CD4-positive, alpha-beta memory T cell (primary cell): ENCODE measurements at regions of chr1 and their contacts with region 1.

Region 1: DNA sequence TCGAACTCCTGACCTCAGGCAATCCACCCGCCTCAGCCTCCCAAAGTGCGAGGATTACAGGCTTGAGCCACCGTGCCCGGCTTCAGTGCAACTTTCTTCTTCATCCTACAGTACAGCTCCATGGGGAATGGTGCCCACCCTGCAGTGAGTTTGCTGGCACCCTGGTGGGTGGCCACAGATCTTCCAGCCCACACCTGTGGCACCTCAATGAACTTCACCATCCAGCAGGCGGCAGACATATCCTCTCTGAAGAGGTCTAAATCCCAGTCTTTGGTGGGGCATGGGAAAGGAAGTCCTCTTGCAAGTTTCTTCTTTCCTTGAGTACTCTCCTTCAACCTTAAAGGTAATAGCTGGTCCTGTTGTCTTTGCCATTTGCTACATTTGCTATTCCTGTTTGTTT is 18.1 kb upstream of the ZBTB8A start:
- DNase-seq: no peak
- H3K4me3 ChIP-seq: no peak overlapping the region
- H3K4me3 Mint-ChIP-seq: peak overlapping the region; percentile 55 to 82 (median 79)
- H3K27ac ChIP-seq: no peak overlapping the region
- H3K27ac Mint-ChIP-seq: no peak overlapping the region
- H3K4me1 ChIP-seq: no peaks in the 10 kb centered on the region
- H3K4me1 Mint-ChIP-seq: peaks cover 0 to 11% (median 1%) of the 10 kb centered on the region in 4 donors
- H3K27me3 ChIP-seq: no peaks in the 10 kb centered on the region
- H3K27me3 Mint-ChIP-seq: peaks cover 5 to 9% of the 10 kb centered on the region in 2 donors

Region 2: GRCh38 chr1:32536117-32536516 is 15.0 kb after region 1 on chr1:
- CTCF ChIA-PET with region 1: interaction called, 21 read pairs
- POLR2A ChIA-PET with region 1: no interaction called
- intact Hi-C with region 1: no loop called
- DNase-seq: no peak
- H3K4me3 ChIP-seq: no peak overlapping the region
- H3K4me3 Mint-ChIP-seq: no peak overlapping the region
- H3K27ac ChIP-seq: no peak overlapping the region
- H3K27ac Mint-ChIP-seq: no peak overlapping the region
- H3K4me1 ChIP-seq: peaks cover 4% of the 10 kb centered on the region
- H3K4me1 Mint-ChIP-seq: peaks cover 5 to 16% (median 6%) of the 10 kb centered on the region in 4 donors
- H3K27me3 ChIP-seq: peaks cover 22% of the 10 kb centered on the region
- H3K27me3 Mint-ChIP-seq: peaks cover 31 to 37% of the 10 kb centered on the region in 2 donors